CD14-positive monocyte (primary cell): ENCODE measurements at regions of chr6 and their contacts with region 1.

Region 1: DNA sequence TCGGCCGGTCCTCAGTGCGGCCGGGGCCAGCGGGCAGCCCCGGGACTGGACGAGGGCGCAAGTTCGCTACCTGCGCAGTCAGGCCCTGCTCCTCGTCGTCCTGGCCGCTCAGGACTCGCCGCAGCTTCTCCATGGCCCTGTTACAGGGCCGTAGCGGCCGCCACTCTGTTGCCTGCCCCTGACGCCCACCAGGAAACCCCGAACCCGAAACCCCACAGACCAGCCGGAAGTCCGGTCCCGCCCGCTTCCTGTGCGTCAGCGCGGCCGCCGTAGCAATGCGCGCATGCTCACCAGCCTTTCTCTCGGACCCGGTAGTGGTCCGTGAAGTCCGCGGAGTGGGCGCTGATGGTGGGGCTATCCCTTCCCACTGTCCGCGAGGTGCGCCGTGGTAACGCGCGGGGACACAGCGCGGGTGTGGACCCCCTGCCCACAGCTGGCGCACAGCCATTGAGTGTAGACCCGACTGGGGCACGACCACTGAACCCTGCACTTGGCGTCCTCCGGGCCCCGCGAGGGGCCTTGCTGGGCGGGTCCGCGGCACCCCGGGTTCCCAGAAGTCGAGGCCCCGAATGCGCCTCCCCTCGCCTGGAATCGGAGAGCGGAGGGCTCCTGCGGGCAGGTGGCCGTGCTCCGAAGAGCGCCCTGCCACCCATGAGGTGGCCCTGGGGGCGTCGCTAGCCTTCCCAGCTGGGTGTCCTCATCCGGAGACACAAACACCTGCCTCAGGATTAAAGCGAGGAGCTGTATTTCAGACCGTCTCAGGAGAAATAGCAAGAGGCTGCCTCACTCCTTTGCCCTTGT is at the start of gene SFT2D1:
- DNase-seq: peak; percentile 90 to 95 (median 92)
- H3K4me3 ChIP-seq: peak within 1 kb of the TSS; percentile 67 to 97 (median 88)
- H3K4me3 Mint-ChIP-seq: peak within 1 kb of the TSS; percentile 93 to 98
- H3K27ac ChIP-seq: peak within 1 kb of the TSS; percentile 94 to 100
- H3K27ac Mint-ChIP-seq: peak within 1 kb of the TSS; percentile 96 to 98 (median 97)
- H3K4me1 ChIP-seq: peaks cover 36 to 40% of the 10 kb centered on the region in 2 donors
- H3K4me1 Mint-ChIP-seq: peaks cover 22% of the 10 kb centered on the region
- H3K27me3 ChIP-seq: no peaks in the 10 kb centered on the region
- H3K27me3 Mint-ChIP-seq: peaks cover 0 to 1% (median 0%) of the 10 kb centered on the region in 3 donors
- CTCF ChIP-seq: no peak
- polyA plus RNA-seq, gene SFT2D1: 48.1 to 166 (median 140) TPM

Region 2: DNA sequence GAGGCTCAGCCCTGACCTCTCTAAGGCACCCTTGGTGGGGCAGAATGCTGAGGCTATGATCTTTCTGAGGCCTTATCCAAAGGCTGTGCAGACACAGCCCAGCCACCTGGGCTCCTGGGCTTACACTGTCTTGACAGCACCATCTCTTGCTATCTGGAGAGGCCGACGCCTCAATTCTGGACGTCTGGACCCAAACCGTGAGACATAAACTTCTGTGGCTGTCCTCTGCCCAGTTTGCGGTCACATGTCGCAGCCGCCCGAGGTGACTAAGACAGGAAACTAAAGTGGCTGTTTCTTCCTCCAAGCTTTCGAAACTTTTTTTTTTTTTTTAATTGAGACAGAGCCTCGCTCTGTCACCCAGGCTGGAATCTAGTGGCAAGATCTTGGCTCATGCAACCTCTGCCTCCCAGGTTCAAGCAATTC is 83.7 kb before region 1 on chr6:
- intact Hi-C with region 1: loop called in 1 of 2 experiments (anchors 5 kb)
- DNase-seq: peak; percentile 94 to 97 (median 95)
- H3K4me3 ChIP-seq: peak overlapping the region in 1 of 3 experiments; percentile 49
- H3K4me3 Mint-ChIP-seq: peak overlapping the region; percentile 66 to 80
- H3K27ac ChIP-seq: peak overlapping the region; percentile 95 to 99
- H3K27ac Mint-ChIP-seq: peak overlapping the region; percentile 99 to 100 (median 99)
- H3K4me1 ChIP-seq: peaks cover 39 to 47% of the 10 kb centered on the region in 2 donors
- H3K4me1 Mint-ChIP-seq: peaks cover 58% of the 10 kb centered on the region
- H3K27me3 ChIP-seq: no peaks in the 10 kb centered on the region
- H3K27me3 Mint-ChIP-seq: peaks cover 8 to 15% (median 10%) of the 10 kb centered on the region in 3 donors
- CTCF ChIP-seq: no peak

Region 3: GRCh38 chr6:166382933-166383801 is 40.6 kb after region 1 on chr6 and contains the start of gene MPC1:
- intact Hi-C with region 1: loop called (anchors 1 to 2 kb)
- DNase-seq: peak; percentile 91 to 93 (median 92)
- H3K4me3 ChIP-seq: peak within 1 kb of the TSS; percentile 89 to 97 (median 92)
- H3K4me3 Mint-ChIP-seq: peak within 1 kb of the TSS; percentile 94 to 95
- H3K27ac ChIP-seq: peak within 1 kb of the TSS; percentile 81 to 86
- H3K27ac Mint-ChIP-seq: peak within 1 kb of the TSS; percentile 88 to 95 (median 90)
- H3K4me1 ChIP-seq: peaks cover 14 to 25% of the 10 kb centered on the region in 2 donors
- H3K4me1 Mint-ChIP-seq: peaks cover 23% of the 10 kb centered on the region
- H3K27me3 ChIP-seq: no peaks in the 10 kb centered on the region
- H3K27me3 Mint-ChIP-seq: no peaks in the 10 kb centered on the region
- CTCF ChIP-seq: peak; percentile 44
- polyA plus RNA-seq, gene MPC1: 52.4 to 122 (median 104) TPM

Region 4: GRCh38 chr6:166572370-166573261 is 230.1 kb after region 1 on chr6:
- intact Hi-C with region 1: no loop called
- DNase-seq: no peak
- H3K4me3 ChIP-seq: no peak overlapping the region
- H3K4me3 Mint-ChIP-seq: no peak overlapping the region
- H3K27ac ChIP-seq: no peak overlapping the region
- H3K27ac Mint-ChIP-seq: peak overlapping the region in 1 of 7 donors; percentile 31
- H3K4me1 ChIP-seq: no peaks in the 10 kb centered on the region
- H3K4me1 Mint-ChIP-seq: peaks cover 12% of the 10 kb centered on the region
- H3K27me3 ChIP-seq: no peaks in the 10 kb centered on the region
- H3K27me3 Mint-ChIP-seq: peaks cover 0 to 5% (median 3%) of the 10 kb centered on the region in 3 donors
- CTCF ChIP-seq: no peak